ENCODE measurements at regions of chr2 and their contacts with region 1.

Region 1: GRCh38 chr2:73926493-73927338 is at the start of gene DGUOK:
- DNase-seq: peak; percentile 99
- H3K4me3 Mint-ChIP-seq: peak within 1 kb of the TSS; percentile 93
- H3K27ac Mint-ChIP-seq: peak within 1 kb of the TSS; percentile 96
- H3K4me1 Mint-ChIP-seq: peaks cover 50% of the 10 kb centered on the region
- H3K27me3 Mint-ChIP-seq: no peaks in the 10 kb centered on the region
- total RNA-seq, gene DGUOK: 88.9 and 94.9 TPM in 2 replicates

Region 2: DNA sequence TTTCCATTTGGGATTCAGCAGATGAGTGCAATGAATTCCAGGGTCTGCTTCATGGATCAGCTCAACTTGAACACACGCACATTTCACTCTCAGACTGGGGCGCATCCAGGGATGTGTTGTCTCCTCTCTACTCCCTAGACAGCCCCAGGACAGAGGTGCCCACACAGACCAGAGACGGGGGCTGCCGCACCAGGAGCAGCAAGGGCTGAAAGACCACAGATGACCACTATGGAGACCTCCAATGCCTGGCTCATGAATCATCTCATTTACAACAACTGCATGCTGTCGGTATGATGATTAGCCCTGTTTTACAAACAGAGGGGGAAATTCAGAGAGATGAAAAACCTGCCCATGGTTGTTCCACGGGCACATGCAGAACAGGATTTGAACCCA is 1842.1 kb before region 1 on chr2:
- intact Hi-C with region 1: no loop called
- DNase-seq: no peak
- H3K4me3 Mint-ChIP-seq: no peak overlapping the region
- H3K27ac Mint-ChIP-seq: no peak overlapping the region
- H3K4me1 Mint-ChIP-seq: no peaks in the 10 kb centered on the region
- H3K27me3 Mint-ChIP-seq: no peaks in the 10 kb centered on the region

Region 3: DNA sequence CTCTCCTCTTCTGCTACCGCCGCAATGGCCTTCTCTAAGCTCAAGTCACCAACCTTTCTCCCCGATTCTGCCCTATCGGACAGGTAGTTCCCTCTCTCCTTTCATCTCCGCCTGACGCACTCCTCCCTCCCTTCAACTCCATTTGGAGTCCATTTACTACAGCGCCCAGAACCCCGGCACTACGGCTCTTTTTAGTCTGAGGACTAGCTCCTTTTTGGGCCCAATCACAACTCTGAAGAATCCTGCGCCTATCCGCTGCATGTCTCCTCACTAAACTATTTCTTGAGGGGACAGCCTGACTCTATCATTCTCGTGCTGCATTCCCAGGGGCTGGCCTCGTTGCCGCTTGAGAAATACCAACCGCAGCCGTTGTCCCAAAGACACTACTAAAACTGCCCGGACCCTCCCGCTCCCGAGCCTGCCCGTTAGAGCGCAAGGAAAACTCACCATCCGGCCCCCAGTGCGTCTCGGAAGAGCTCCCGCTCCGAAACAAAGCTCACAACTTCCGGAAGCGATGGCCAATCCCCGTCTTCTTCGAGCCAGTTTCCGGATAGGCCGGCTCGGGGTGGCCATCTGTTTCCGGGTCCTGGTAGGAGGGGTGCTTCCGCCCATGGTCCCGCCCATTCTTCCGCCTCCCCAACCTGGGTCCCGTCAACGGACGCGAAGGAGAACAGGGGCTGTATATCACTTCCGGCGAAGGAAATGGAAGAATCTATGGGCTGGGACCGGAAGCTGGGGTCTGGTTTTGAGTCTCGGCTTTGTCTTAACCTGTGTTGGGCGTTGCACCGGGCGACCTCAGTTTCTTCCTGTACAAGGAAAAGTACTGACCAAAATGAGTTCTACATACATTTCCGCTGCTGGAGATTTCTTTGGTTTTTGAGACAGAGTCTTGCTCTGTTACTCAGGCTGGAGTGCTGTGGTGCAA is 189.6 kb before region 1 on chr2 and contains the start of gene TPRKB:
- intact Hi-C with region 1: loop called (anchors 1 kb)
- DNase-seq: peak; percentile 98
- H3K4me3 Mint-ChIP-seq: peak within 1 kb of the TSS; percentile 100
- H3K27ac Mint-ChIP-seq: peak within 1 kb of the TSS; percentile 91
- H3K4me1 Mint-ChIP-seq: peaks cover 10% of the 10 kb centered on the region
- H3K27me3 Mint-ChIP-seq: no peaks in the 10 kb centered on the region
- total RNA-seq, gene TPRKB: 37.6 and 38.5 TPM in 2 replicates

Region 4: DNA sequence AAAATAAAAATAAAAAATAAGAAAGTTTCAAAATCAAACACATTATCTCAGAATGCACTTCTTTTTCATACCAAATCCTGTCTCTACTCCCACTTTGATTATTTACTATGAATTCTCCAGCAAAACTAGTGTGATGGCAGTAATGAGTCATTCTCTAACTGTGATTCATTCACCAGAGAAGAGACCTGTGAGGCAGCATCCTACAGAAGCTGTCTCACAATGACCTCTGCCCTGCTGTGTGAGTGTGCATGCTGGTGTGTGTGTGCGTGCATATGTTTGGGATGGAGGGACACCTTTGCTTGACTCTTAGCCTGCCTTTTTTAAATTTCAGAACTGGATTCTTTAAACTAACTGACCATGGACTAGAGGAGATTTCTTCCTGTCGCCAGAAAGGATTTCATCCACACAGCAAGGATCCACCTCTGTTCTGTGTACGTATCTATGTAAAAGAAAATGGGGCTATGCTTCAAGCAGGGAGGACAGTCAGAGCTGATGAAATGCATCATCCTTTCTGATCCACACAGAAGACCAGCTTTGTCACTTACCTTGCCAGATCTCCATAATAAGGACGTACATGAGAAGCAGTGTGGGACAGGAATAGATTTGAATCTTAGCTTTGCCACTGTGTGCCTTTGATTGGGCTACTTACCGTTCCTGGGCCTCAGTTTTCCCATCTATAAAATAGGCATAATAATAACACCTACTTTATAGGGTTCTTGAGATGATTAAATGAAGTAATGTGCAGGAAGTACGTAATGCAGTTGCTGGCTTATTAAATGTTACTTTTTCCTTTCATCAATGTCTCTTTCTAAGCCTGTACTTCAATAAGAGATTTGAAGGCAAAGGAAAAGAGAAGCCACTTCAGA is 66.8 kb before region 1 on chr2:
- intact Hi-C with region 1: loop called (anchors 1 kb)
- DNase-seq: peak; percentile 62
- H3K4me3 Mint-ChIP-seq: no peak overlapping the region
- H3K27ac Mint-ChIP-seq: peak overlapping the region; percentile 70
- H3K4me1 Mint-ChIP-seq: peaks cover 31% of the 10 kb centered on the region
- H3K27me3 Mint-ChIP-seq: no peaks in the 10 kb centered on the region

Region 5: DNA sequence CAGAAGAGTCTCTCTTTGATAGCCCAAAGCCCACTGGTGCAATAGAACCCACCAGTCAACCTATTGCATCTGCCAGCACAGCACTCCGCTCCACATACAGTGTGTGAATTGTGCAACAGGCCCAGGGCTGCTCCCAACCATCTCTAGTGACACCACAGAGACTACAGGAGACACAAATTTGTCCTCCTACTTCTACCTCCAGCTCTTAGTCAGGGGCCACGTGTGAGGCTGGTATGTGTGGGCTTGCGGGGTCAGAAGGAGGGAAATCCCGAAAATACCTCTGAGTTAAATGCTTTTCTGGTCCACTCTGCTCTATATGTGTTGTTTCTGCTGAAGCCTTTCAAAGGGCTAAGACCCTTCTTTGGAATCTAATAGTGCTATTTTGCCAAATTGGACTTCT is 18.0 kb after region 1 on chr2:
- intact Hi-C with region 1: loop called (anchors 2 kb)
- DNase-seq: no peak
- H3K4me3 Mint-ChIP-seq: peak overlapping the region; percentile 44
- H3K27ac Mint-ChIP-seq: peak overlapping the region; percentile 69
- H3K4me1 Mint-ChIP-seq: peaks cover 53% of the 10 kb centered on the region
- H3K27me3 Mint-ChIP-seq: no peaks in the 10 kb centered on the region

Region 6: GRCh38 chr2:74147727-74148456 is 221.2 kb after region 1 on chr2 and contains the start of gene BOLA3:
- intact Hi-C with region 1: loop called (anchors 2 kb)
- DNase-seq: peak; percentile 96
- H3K4me3 Mint-ChIP-seq: no peak within 1 kb of the TSS
- H3K27ac Mint-ChIP-seq: no peak within 1 kb of the TSS
- H3K4me1 Mint-ChIP-seq: peaks cover 2% of the 10 kb centered on the region
- H3K27me3 Mint-ChIP-seq: no peaks in the 10 kb centered on the region
- total RNA-seq, gene BOLA3: 100 and 103 TPM in 2 replicates